ENCODE measurements at regions of chr10 and their contacts with region 1.

Region 1: GRCh38 chr10:44932517-44933450 is 21.6 kb downstream of the TMEM72 start:
- DNase-seq: peak; percentile 64 to 70 (median 68)
- H3K4me3 ChIP-seq: no peak overlapping the region
- H3K4me3 Mint-ChIP-seq: no peak overlapping the region
- H3K27ac ChIP-seq: no peak overlapping the region
- H3K27ac Mint-ChIP-seq: no peak overlapping the region
- H3K4me1 ChIP-seq: no peaks in the 10 kb centered on the region
- H3K4me1 Mint-ChIP-seq: peaks cover 0 to 3% (median 1%) of the 10 kb centered on the region in 4 donors
- H3K27me3 ChIP-seq: no peaks in the 10 kb centered on the region
- H3K27me3 Mint-ChIP-seq: peaks cover 0 to 6% of the 10 kb centered on the region in 2 donors

Region 2: GRCh38 chr10:44952779-44953231 is 20.0 kb after region 1 on chr10:
- CTCF ChIA-PET with region 1: interaction called, 23 read pairs
- POLR2A ChIA-PET with region 1: no interaction called
- intact Hi-C with region 1: no loop called
- DNase-seq: no peak
- H3K4me3 ChIP-seq: no peak overlapping the region
- H3K4me3 Mint-ChIP-seq: no peak overlapping the region
- H3K27ac ChIP-seq: no peak overlapping the region
- H3K27ac Mint-ChIP-seq: peak overlapping the region in 1 of 7 donors; percentile 46
- H3K4me1 ChIP-seq: peaks cover 4% of the 10 kb centered on the region
- H3K4me1 Mint-ChIP-seq: peaks cover 1 to 7% (median 5%) of the 10 kb centered on the region in 4 donors
- H3K27me3 ChIP-seq: no peaks in the 10 kb centered on the region
- H3K27me3 Mint-ChIP-seq: no peaks in the 10 kb centered on the region

Region 3: DNA sequence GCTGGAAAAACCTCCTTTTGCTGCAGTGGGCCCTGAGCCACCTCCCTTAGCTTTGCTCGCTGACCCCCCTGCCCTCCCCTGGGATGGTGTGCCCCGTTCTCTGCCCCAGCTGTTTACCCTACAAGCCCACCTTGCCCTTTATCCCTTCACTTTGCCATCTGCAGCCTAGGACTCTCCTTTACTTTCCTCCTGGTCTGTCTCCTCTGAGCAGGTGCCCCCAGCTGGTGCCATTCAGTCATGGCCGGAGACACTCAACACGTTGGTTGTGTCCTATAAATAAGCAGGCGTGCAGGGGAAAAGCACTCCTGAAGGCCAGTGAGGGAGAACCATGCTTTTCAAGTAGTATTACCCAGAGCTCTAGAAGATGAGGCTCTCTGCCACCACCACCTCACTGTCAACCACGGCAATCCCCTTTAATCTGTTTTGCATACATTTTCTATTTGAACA is 32.9 kb after region 1 on chr10:
- CTCF ChIA-PET with region 1: interaction called, 15 read pairs
- POLR2A ChIA-PET with region 1: no interaction called
- intact Hi-C with region 1: no loop called
- DNase-seq: no peak
- H3K4me3 ChIP-seq: no peak overlapping the region
- H3K4me3 Mint-ChIP-seq: peak overlapping the region in 1 of 8 donors; percentile 22
- H3K27ac ChIP-seq: no peak overlapping the region
- H3K27ac Mint-ChIP-seq: no peak overlapping the region
- H3K4me1 ChIP-seq: peaks cover 25% of the 10 kb centered on the region
- H3K4me1 Mint-ChIP-seq: peaks cover 11 to 32% (median 19%) of the 10 kb centered on the region in 4 donors
- H3K27me3 ChIP-seq: no peaks in the 10 kb centered on the region
- H3K27me3 Mint-ChIP-seq: no peaks in the 10 kb centered on the region

Region 4: GRCh38 chr10:44974628-44975431 is 42.0 kb after region 1 on chr10:
- CTCF ChIA-PET with region 1: interaction called, 31 read pairs
- POLR2A ChIA-PET with region 1: interaction called, 6 read pairs
- intact Hi-C with region 1: no loop called
- DNase-seq: peak in 4 of 5 donors; percentile 60 to 75 (median 65)
- H3K4me3 ChIP-seq: peak overlapping the region; percentile 60 to 61
- H3K4me3 Mint-ChIP-seq: peak overlapping the region; percentile 61 to 80 (median 74)
- H3K27ac ChIP-seq: no peak overlapping the region
- H3K27ac Mint-ChIP-seq: peak overlapping the region in 4 of 7 donors; percentile 16 to 77 (median 33)
- H3K4me1 ChIP-seq: peaks cover 17% of the 10 kb centered on the region
- H3K4me1 Mint-ChIP-seq: peaks cover 0 to 9% (median 3%) of the 10 kb centered on the region in 4 donors
- H3K27me3 ChIP-seq: no peaks in the 10 kb centered on the region
- H3K27me3 Mint-ChIP-seq: no peaks in the 10 kb centered on the region